Activated CD4-positive, alpha-beta T cell treated with anti-CD3 and anti-CD28 coated beads for 36 hours (primary cell): ENCODE measurements at regions of chr5 and their contacts with region 1.

Region 1: DNA sequence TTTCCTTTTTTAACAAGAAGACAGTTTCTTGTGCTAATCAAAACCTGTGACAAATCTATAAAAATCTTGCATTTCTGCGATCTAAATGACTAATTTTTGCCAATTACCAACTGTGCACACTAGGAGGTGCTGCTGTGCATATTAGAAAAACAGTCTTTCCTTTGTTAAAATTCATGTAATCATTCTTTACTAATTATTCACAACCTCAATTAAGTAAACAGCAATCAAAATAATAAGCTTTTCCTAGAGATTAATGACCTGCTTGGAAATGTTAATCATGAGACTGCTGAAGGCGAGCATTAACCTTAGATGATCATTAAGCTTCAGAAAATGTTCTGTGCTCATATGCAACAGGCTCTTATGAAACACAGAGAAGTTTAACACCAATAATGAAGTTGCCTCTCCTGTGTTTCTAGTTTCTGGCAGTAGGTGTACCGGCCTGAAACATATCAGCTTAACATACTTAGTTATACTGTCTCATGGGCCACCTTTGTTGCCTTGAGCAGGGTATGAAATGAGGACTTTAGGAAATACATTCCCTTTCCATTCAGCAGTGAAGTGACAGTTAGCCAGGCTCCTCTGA is 17.7 kb downstream of the RFESD start:
- DNase-seq: peak; percentile 54
- ATAC-seq: no peak
- H3K4me3 Mint-ChIP-seq: no peak overlapping the region
- H3K27ac Mint-ChIP-seq: no peak overlapping the region
- H3K4me1 Mint-ChIP-seq: no peaks in the 10 kb centered on the region
- H3K27me3 Mint-ChIP-seq: no peaks in the 10 kb centered on the region

Region 2: GRCh38 chr5:95652849-95653248 is 11.4 kb before region 1 on chr5:
- CTCF ChIA-PET with region 1: interaction called, 11 read pairs
- POLR2A ChIA-PET with region 1: no interaction called
- intact Hi-C with region 1: no loop called
- DNase-seq: no peak
- ATAC-seq: no peak
- H3K4me3 Mint-ChIP-seq: no peak overlapping the region
- H3K27ac Mint-ChIP-seq: no peak overlapping the region
- H3K4me1 Mint-ChIP-seq: peaks cover 16% of the 10 kb centered on the region
- H3K27me3 Mint-ChIP-seq: no peaks in the 10 kb centered on the region

Region 3: GRCh38 chr5:95697781-95698681 is 33.7 kb after region 1 on chr5:
- CTCF ChIA-PET with region 1: interaction called, 10 read pairs
- POLR2A ChIA-PET with region 1: no interaction called
- intact Hi-C with region 1: no loop called
- DNase-seq: no peak
- ATAC-seq: no peak
- H3K4me3 Mint-ChIP-seq: no peak overlapping the region
- H3K27ac Mint-ChIP-seq: no peak overlapping the region
- H3K4me1 Mint-ChIP-seq: no peaks in the 10 kb centered on the region
- H3K27me3 Mint-ChIP-seq: peaks cover 6% of the 10 kb centered on the region

Region 4: GRCh38 chr5:95730730-95731570 is 66.7 kb after region 1 on chr5 and contains the start of gene RHOBTB3:
- CTCF ChIA-PET with region 1: interaction called, 15 read pairs
- POLR2A ChIA-PET with region 1: no interaction called
- intact Hi-C with region 1: no loop called
- DNase-seq: peak; percentile 62
- ATAC-seq: peak; percentile 52
- H3K4me3 Mint-ChIP-seq: peak within 1 kb of the TSS; percentile 75
- H3K27ac Mint-ChIP-seq: peak within 1 kb of the TSS; percentile 72
- H3K4me1 Mint-ChIP-seq: peaks cover 64% of the 10 kb centered on the region
- H3K27me3 Mint-ChIP-seq: peaks cover 33% of the 10 kb centered on the region
- total RNA-seq, gene RHOBTB3: 3.3 to 3.5 TPM

Region 5: DNA sequence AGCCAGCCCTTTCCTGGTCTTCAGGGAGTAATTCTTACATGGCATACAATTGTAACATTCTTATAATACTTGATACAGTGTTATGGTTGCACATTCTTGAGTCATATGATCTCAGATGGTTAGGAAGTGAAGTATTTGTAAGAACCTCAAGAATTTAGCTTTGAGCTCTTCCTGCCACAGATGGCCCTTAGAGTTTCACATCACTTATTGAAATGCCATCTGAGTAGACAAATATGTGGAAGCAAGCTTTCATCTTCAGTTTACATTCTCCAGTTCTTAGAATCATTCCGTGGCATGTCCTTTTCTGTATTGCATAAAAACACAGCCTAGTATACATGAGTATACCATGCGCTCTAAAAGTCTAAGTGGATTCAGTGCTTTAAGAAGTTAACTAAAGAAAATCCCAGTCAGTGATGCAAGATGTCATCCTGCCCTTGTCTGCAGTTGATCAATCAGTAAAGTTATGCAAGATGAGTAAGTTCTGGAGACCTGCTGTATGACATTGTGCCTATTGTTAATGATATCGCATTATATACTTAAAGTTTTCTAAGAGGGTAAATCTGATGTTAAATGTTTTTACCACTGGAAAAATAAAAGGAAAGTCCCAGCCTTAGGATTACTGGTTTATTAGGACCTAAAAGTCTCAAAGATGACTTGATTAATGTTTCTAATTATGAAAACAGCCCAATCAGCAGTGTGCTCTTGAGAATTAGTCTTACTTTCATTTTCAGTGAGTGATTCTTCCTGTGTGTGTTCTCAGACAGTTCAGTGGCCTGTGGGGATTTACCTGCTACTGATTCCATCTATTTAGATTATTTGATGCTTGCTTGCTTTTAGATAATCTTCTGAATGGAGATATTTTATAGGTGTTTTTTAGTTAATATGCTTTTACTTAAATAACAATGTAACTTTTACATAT is 96.2 kb after region 1 on chr5:
- CTCF ChIA-PET with region 1: interaction called, 4 read pairs
- POLR2A ChIA-PET with region 1: no interaction called
- intact Hi-C with region 1: loop called (anchors 5 kb)
- DNase-seq: peak; percentile 29
- ATAC-seq: peak; percentile 91
- H3K4me3 Mint-ChIP-seq: peak overlapping the region; percentile 52
- H3K27ac Mint-ChIP-seq: peak overlapping the region; percentile 69
- H3K4me1 Mint-ChIP-seq: peaks cover 27% of the 10 kb centered on the region
- H3K27me3 Mint-ChIP-seq: no peaks in the 10 kb centered on the region

Region 6: GRCh38 chr5:95864944-95865504 is 200.7 kb after region 1 on chr5:
- CTCF ChIA-PET with region 1: no interaction called
- POLR2A ChIA-PET with region 1: no interaction called
- intact Hi-C with region 1: no loop called
- DNase-seq: no peak
- ATAC-seq: no peak
- H3K4me3 Mint-ChIP-seq: no peak overlapping the region
- H3K27ac Mint-ChIP-seq: peak overlapping the region; percentile 68
- H3K4me1 Mint-ChIP-seq: peaks cover 81% of the 10 kb centered on the region
- H3K27me3 Mint-ChIP-seq: no peaks in the 10 kb centered on the region